Psoas muscle (tissue), 8 donors: ENCODE measurements at regions of chr13 and their contacts with region 1.

Region 1: DNA sequence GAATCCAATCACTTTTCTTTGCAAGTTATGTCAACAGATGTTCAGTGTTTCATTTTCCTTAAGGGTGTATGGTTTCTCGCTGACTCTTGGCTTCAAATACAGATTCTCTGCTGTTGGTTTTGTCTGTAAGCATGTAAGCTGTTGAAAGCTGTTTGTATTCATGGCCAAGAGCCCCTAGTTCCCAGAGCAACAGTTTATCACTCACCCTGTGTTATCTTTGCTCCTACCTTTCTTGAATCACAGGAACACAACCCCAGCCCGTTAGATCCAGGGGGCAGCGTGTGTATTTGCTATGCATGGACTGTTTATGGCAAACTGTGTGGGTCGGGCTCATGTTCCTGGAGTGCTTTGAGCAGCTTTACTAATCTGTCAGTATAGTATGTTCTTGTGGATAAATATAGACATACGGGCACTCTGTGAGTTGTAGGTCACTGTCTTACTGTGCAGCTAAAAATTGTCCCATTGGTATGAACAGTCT is 28.9 kb downstream of the FRY start:
- DNase-seq: peak in 1 of 2 donors; percentile 53
- ATAC-seq: peak; percentile 96 to 98 (median 97)
- H3K4me3 ChIP-seq: peak overlapping the region; percentile 62
- H3K27ac ChIP-seq: peak overlapping the region; percentile 86
- H3K4me1 ChIP-seq: peaks cover 54% of the 10 kb centered on the region
- H3K27me3 ChIP-seq: no peaks in the 10 kb centered on the region
- CTCF ChIP-seq: no peak

Region 2: GRCh38 chr13:32117701-32118100 is 57.3 kb after region 1 on chr13:
- intact Hi-C with region 1: loop called (anchors 5 to 10 kb)
- DNase-seq: peak; percentile 45 to 86
- ATAC-seq: peak; percentile 99
- H3K4me3 ChIP-seq: peak overlapping the region; percentile 23
- H3K27ac ChIP-seq: peak overlapping the region; percentile 87
- H3K4me1 ChIP-seq: peaks cover 33% of the 10 kb centered on the region
- H3K27me3 ChIP-seq: no peaks in the 10 kb centered on the region
- CTCF ChIP-seq: peak; percentile 9